ENCODE measurements at regions of chr7 and their contacts with region 1.

Region 1: GRCh38 chr7:33050535-33051318 is 11.8 kb downstream of the NT5C3A start:
- DNase-seq: no peak
- ATAC-seq: peak; percentile 66

Region 2: GRCh38 chr7:32803406-32804141 is 247.2 kb before region 1 on chr7:
- intact Hi-C with region 1: loop called (anchors 5 kb)
- DNase-seq: no peak
- ATAC-seq: no peak

Region 3: GRCh38 chr7:32846701-32847100 is 204.0 kb before region 1 on chr7:
- intact Hi-C with region 1: loop called (anchors 5 kb)
- DNase-seq: peak; percentile 92
- ATAC-seq: peak; percentile 99

Measured in Right ventricle myocardium inferior (tissue), 1 donor.